ENCODE measurements at regions of chr3 and their contacts with region 1.

Region 1: DNA sequence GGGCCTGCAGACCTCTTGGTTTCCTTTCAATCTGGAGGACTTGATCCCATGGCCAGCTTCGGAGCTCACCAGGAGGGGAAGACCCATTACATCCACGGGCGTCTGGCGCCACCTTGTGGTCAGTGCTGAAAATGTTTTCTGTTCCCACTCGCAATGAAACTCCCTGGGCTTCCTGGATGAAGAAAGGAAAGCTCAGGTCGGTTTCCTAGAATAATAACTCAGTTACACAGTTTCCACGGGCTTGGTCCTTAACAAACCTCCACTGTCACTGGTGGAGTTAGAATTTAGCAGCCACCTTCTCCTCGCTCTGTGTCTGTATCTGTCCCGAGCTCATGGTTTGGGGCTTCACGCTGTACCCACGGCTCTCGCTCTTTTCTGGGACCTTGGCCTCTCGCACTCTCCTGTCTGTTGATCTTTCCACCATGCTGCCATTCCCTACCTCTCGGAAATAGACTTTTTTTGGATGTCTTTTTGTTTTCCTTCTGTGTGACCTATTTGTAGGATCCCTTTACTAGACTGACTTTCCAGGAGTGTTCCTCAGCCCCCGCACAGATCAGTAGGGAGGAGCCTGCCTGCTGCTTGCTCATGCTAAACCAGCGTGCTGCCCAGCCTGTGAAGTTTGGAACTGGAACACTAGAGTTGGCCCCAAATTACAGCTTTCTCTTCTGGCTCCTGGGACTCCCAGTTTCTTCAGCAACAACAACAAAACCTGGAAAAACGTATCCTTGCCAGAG is 56.3 kb downstream of the IL20RB start:
- DNase-seq: peak; percentile 89
- ATAC-seq: peak; percentile 96

Region 2: DNA sequence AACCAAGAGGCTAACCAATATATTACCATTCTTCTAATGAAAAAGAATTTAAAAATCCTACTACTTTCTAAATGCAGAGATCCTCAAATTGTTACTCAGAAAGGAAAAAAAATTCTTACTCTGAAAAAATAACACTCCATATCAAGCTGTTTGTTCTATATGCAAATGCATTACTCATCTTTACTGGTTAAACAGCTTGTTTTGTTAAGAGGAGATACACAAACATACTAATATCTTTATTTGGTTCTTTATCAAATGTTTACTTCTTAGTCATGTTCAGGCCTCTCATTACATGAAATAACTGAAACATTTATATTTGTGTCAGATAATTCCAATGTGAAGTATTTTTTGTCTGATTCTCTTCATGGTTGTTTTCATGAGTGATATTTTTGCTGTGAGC is 617.2 kb before region 1 on chr3:
- intact Hi-C with region 1: loop called in 1 of 2 experiments (anchors 10 kb)
- DNase-seq: no peak
- ATAC-seq: no peak

Region 3: GRCh38 chr3:136752422-136753325 is 261.4 kb before region 1 on chr3:
- intact Hi-C with region 1: loop called (anchors 5 kb)
- DNase-seq: peak; percentile 99
- ATAC-seq: peak; percentile 93 to 96

Region 4: GRCh38 chr3:136818769-136819391 is 195.2 kb before region 1 on chr3 and contains the start of gene SLC35G2:
- intact Hi-C with region 1: loop called in 1 of 2 experiments (anchors 5 kb)
- DNase-seq: peak; percentile 71
- ATAC-seq: peak; percentile 83 to 85
- total RNA-seq, gene SLC35G2: 4.6 to 8.2 TPM

Region 5: DNA sequence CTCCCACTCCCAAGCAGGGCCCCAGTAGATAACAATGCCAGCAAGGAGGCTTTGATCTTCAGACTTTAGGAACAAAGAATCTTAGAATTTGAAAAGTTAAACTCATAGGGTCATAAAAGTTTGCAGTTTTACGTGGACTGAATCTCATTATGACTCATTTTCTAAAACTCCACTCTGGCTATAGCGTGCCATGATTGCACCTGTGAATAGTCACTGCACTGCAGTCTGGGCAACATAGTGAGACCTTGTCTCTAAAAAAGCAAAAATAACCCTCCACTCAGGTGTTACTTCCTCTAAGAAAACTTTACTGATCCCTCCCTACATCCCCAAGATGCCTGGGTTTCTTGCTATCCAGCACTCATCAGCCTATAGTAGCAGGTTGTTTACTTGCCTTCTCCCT is 48.1 kb after region 1 on chr3:
- intact Hi-C with region 1: no loop called
- DNase-seq: no peak
- ATAC-seq: no peak

Measured in left cardiac atrium (tissue), 4 donors.